ENCODE measurements at regions of chr20 and their contacts with region 1.

Region 1: GRCh38 chr20:58692594-58693226 is at the start of gene NPEPL1:
- DNase-seq: peak; percentile 76
- H3K4me3 ChIP-seq: peak within 1 kb of the TSS; percentile 30 to 56 (median 55)
- H3K27ac ChIP-seq: peak within 1 kb of the TSS; percentile 90 to 96 (median 94)
- H3K4me1 ChIP-seq: peaks cover 0 to 53% (median 50%) of the 10 kb centered on the region in 4 donors
- H3K27me3 ChIP-seq: no peaks in the 10 kb centered on the region
- CTCF ChIP-seq: no peak
- EP300 ChIP-seq: no peak
- POLR2A ChIP-seq: no peak
- total RNA-seq, gene NPEPL1: 22.9 to 65.1 (median 46.0) TPM

Region 2: DNA sequence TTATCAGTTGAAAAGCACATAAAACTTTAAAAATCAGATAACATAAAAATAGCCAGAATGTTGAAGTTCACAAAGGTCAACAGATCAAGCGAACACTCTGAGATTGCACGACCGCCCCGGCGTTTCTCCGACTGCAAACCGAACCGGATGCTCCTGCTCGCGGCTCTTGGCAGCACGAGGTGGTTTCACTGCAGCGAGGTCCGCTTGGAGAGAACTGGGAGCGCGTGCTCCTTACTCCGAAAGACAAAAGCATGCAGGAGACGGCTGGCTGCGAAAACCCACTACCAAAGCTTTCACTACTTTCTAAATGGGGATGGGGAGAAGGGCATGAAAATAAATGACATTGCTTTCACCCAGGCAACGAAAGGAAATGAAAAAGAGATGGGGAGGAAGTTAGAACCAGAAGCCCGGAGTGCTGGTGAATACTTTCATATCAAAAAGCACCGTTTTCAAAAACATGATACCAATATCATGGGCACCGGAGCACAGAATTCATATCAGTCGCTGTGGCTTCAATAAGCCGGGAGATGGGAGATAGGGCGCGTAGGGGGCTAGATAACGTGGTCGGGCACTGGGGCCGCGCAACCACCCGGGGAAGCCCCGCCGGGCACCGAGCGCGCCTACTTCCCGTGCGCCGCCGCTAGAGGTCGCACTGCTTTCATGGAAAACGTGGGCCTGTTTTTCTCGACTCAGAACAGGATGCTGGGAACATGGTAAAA is 455.9 kb before region 1 on chr20:
- intact Hi-C with region 1: loop called (anchors 2 kb)
- DNase-seq: peak; percentile 77
- H3K4me3 ChIP-seq: peak overlapping the region; percentile 15 to 51 (median 40)
- H3K27ac ChIP-seq: peak overlapping the region in 3 of 4 donors; percentile 10 to 38 (median 11)
- H3K4me1 ChIP-seq: peaks cover 0 to 11% (median 3%) of the 10 kb centered on the region in 4 donors
- H3K27me3 ChIP-seq: no peaks in the 10 kb centered on the region
- CTCF ChIP-seq: peak; percentile 81 to 95 (median 91)
- EP300 ChIP-seq: no peak
- POLR2A ChIP-seq: no peak

Region 3: GRCh38 chr20:58309575-58310290 is 383.0 kb before region 1 on chr20 and contains the start of gene RAB22A:
- intact Hi-C with region 1: loop called (anchors 5 kb)
- DNase-seq: peak; percentile 92
- H3K4me3 ChIP-seq: peak within 1 kb of the TSS; percentile 60 to 99 (median 80)
- H3K27ac ChIP-seq: peak within 1 kb of the TSS; percentile 79 to 90 (median 84)
- H3K4me1 ChIP-seq: peaks cover 0 to 42% (median 28%) of the 10 kb centered on the region in 4 donors
- H3K27me3 ChIP-seq: no peaks in the 10 kb centered on the region
- CTCF ChIP-seq: no peak
- EP300 ChIP-seq: no peak
- POLR2A ChIP-seq: no peak
- total RNA-seq, gene RAB22A: 17.6 to 21.6 (median 21.0) TPM

Region 4: GRCh38 chr20:58481481-58482021 is 211.2 kb before region 1 on chr20:
- intact Hi-C with region 1: loop called (anchors 2 kb)
- DNase-seq: no peak
- H3K4me3 ChIP-seq: no peak overlapping the region
- H3K27ac ChIP-seq: peak overlapping the region in 3 of 4 donors; percentile 77 to 81 (median 78)
- H3K4me1 ChIP-seq: peaks cover 0 to 23% (median 22%) of the 10 kb centered on the region in 4 donors
- H3K27me3 ChIP-seq: no peaks in the 10 kb centered on the region
- CTCF ChIP-seq: peak; percentile 42 to 69 (median 60)
- EP300 ChIP-seq: no peak
- POLR2A ChIP-seq: no peak

Region 5: DNA sequence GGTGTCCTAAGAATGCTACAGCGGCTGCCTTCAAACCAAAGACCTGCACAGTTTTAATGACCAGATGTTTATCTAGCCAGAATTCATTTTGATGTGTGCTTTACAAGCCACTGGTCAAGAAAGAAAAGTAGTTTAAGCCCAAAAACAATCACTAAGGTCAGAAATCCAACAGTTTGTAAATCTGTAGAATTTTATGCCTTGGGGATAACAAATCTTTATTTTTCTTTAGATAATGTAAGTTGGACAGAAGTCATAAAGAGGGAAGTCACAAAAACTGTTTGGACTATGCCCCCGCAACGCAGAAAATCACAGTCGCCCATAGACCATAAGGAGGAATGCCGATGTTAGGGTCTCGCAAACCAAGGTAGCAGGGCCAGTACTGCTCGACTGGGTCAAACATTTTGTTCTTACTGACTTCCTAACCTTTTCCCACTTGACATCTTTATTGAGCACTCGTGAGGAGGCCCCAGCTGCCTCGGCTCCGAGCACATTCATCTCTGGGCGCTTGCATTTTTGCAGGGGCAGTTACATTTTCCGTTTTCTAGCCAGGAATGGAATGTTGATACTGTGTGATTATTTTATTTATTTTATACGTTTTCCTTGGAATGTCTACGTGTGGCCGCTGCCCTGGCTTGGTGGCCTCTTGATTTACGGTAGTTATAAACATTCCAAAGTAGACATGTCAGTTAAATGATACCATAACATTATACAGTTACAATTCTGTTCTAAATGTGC is 120.8 kb before region 1 on chr20:
- intact Hi-C with region 1: loop called (anchors 2 kb)
- DNase-seq: peak; percentile 76
- H3K4me3 ChIP-seq: no peak overlapping the region
- H3K27ac ChIP-seq: peak overlapping the region; percentile 31 to 88 (median 79)
- H3K4me1 ChIP-seq: peaks cover 2 to 59% (median 51%) of the 10 kb centered on the region in 4 donors
- H3K27me3 ChIP-seq: no peaks in the 10 kb centered on the region
- CTCF ChIP-seq: no peak
- EP300 ChIP-seq: peak in 3 of 4 donors; percentile 33 to 73 (median 52)
- POLR2A ChIP-seq: no peak

Region 6: GRCh38 chr20:58598211-58599014 is 94.3 kb before region 1 on chr20:
- intact Hi-C with region 1: loop called (anchors 5 kb)
- DNase-seq: peak; percentile 89
- H3K4me3 ChIP-seq: no peak overlapping the region
- H3K27ac ChIP-seq: peak overlapping the region; percentile 82 to 87 (median 85)
- H3K4me1 ChIP-seq: peaks cover 0 to 88% (median 68%) of the 10 kb centered on the region in 4 donors
- H3K27me3 ChIP-seq: no peaks in the 10 kb centered on the region
- CTCF ChIP-seq: no peak
- EP300 ChIP-seq: no peak
- POLR2A ChIP-seq: no peak

Region 7: GRCh38 chr20:58790454-58790853 is 97.7 kb after region 1 on chr20:
- intact Hi-C with region 1: no loop called
- DNase-seq: no peak
- H3K4me3 ChIP-seq: no peak overlapping the region
- H3K27ac ChIP-seq: no peak overlapping the region
- H3K4me1 ChIP-seq: no peaks in the 10 kb centered on the region
- H3K27me3 ChIP-seq: peaks cover 0 to 21% (median 0%) of the 10 kb centered on the region in 3 donors
- CTCF ChIP-seq: no peak
- EP300 ChIP-seq: no peak
- POLR2A ChIP-seq: no peak

Region 8: GRCh38 chr20:58890518-58891085 is 197.9 kb after region 1 on chr20:
- intact Hi-C with region 1: loop called (anchors 5 kb)
- DNase-seq: peak; percentile 92
- H3K4me3 ChIP-seq: peak overlapping the region; percentile 40 to 93 (median 87)
- H3K27ac ChIP-seq: peak overlapping the region; percentile 98 to 100 (median 99)
- H3K4me1 ChIP-seq: peaks cover 0 to 40% (median 32%) of the 10 kb centered on the region in 4 donors
- H3K27me3 ChIP-seq: no peaks in the 10 kb centered on the region
- CTCF ChIP-seq: no peak
- EP300 ChIP-seq: no peak
- POLR2A ChIP-seq: peak in 1 of 2 donors; percentile 36